CD4-positive, alpha-beta T cell (primary cell): ENCODE measurements at regions of chr17 and their contacts with region 1.

Region 1: DNA sequence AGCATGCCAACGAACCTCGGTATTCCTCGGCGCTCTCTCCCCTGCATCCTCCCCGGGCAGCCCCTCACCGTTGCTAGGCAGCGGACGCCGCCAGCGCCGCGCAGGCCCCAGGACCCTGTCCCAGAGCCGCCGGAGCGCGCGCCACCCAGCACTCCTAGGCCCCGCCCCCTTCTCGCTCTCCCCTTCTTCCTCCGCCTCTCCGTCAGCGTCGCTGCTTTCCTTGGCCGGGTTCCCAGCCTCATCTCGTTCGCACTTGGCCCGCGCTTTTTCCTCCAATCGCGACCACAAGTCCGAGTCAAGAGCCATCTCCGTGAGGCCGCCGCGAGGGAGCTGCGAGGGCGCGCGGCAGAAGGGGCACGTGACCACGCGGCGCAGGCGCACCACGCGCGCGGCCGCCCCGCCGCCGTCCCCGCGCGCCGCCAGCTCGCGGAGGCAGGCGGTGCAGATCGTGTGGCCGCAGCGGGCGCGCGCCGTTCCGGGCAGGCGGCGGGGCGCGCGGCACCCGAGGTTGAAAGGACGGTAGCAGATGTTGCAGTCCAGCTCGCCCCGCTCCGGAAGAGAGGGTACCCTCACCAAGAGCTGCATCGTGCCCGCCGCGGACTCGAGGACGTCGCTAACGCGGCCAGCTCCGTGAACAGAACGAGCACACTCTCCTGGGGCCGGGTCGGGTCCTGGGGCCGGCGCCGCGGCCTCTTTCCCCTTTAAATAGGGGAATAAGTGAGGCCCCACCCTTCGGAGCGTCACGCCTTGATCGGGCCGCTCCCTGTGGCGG is at the start of gene RNF227:
- DNase-seq: peak; percentile 68 to 94 (median 74)
- ATAC-seq: peak; percentile 73
- H3K4me3 ChIP-seq: peak within 1 kb of the TSS; percentile 77
- H3K4me3 Mint-ChIP-seq: peak within 1 kb of the TSS; percentile 89
- H3K27ac ChIP-seq: peak within 1 kb of the TSS; percentile 71 to 80
- H3K27ac Mint-ChIP-seq: peak within 1 kb of the TSS; percentile 90
- H3K4me1 ChIP-seq: peaks cover 35% of the 10 kb centered on the region
- H3K4me1 Mint-ChIP-seq: peaks cover 30% of the 10 kb centered on the region
- H3K27me3 ChIP-seq: no peaks in the 10 kb centered on the region
- H3K27me3 Mint-ChIP-seq: no peaks in the 10 kb centered on the region
- CTCF ChIP-seq: no peak
- total RNA-seq, gene RNF227: 3.2 to 3.5 TPM

Region 2: GRCh38 chr17:7825206-7825990 is 90.4 kb before region 1 on chr17:
- CTCF ChIA-PET with region 1: no interaction called
- POLR2A ChIA-PET with region 1: no interaction called
- intact Hi-C with region 1: loop called (anchors 5 to 10 kb)
- DNase-seq: peak in 1 of 14 experiments; percentile 39
- ATAC-seq: peak; percentile 31
- H3K4me3 ChIP-seq: no peak overlapping the region
- H3K4me3 Mint-ChIP-seq: no peak overlapping the region
- H3K27ac ChIP-seq: no peak overlapping the region
- H3K27ac Mint-ChIP-seq: no peak overlapping the region
- H3K4me1 ChIP-seq: no peaks in the 10 kb centered on the region
- H3K4me1 Mint-ChIP-seq: no peaks in the 10 kb centered on the region
- H3K27me3 ChIP-seq: no peaks in the 10 kb centered on the region
- H3K27me3 Mint-ChIP-seq: no peaks in the 10 kb centered on the region
- CTCF ChIP-seq: no peak

Region 3: GRCh38 chr17:7856883-7857723 is 58.7 kb before region 1 on chr17 and contains the start of gene NAA38:
- CTCF ChIA-PET with region 1: interaction called, 9 read pairs
- POLR2A ChIA-PET with region 1: interaction called, 11 read pairs
- intact Hi-C with region 1: loop called (anchors 10 kb)
- DNase-seq: peak; percentile 86 to 99 (median 91)
- ATAC-seq: peak; percentile 82
- H3K4me3 ChIP-seq: peak within 1 kb of the TSS; percentile 74
- H3K4me3 Mint-ChIP-seq: no peak within 1 kb of the TSS
- H3K27ac ChIP-seq: peak within 1 kb of the TSS; percentile 84 to 96
- H3K27ac Mint-ChIP-seq: no peak within 1 kb of the TSS
- H3K4me1 ChIP-seq: peaks cover 39% of the 10 kb centered on the region
- H3K4me1 Mint-ChIP-seq: peaks cover under 1% of the 10 kb centered on the region
- H3K27me3 ChIP-seq: no peaks in the 10 kb centered on the region
- H3K27me3 Mint-ChIP-seq: no peaks in the 10 kb centered on the region
- CTCF ChIP-seq: no peak
- total RNA-seq, gene NAA38: 15.4 to 16.3 TPM

Region 4: DNA sequence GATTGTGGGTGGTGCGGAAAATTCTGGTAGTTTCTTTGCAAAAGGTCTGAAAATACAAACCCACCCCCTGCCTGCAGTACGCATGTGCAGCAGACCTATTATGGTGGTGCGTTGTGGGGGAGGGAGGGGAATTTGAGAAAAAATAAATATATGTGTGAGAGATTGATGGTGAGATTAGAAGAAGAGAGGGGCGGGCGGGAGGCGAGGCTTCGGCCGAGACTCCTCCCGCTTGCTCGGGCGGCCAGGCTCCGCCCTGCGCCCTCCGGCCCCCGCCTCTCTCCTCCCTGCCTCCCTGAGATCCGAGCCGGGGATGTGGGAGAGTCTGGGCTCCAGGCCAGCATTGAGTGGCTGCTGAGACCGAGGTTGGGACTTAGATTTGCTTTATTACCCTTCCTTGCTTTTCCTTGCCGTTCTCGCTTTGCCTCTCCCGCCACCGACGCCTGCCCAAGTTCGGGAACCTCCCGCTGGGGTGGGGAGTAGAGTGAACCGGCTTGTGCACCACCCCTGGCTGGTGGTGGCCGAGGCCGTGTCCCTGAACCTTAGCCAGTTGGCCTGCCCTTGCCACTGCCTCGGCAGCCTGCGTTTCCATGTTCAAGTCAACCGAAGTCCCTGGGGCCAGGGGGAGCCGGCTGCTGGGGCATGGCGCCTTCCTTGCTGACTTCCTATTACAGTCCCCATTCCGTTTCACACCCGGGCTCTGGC is 28.2 kb before region 1 on chr17:
- CTCF ChIA-PET with region 1: no interaction called
- POLR2A ChIA-PET with region 1: interaction called, 3 read pairs
- intact Hi-C with region 1: loop called (anchors 2 kb)
- DNase-seq: peak; percentile 72 to 97 (median 86)
- ATAC-seq: peak; percentile 69
- H3K4me3 ChIP-seq: peak overlapping the region; percentile 98
- H3K4me3 Mint-ChIP-seq: no peak overlapping the region
- H3K27ac ChIP-seq: peak overlapping the region; percentile 75 to 96
- H3K27ac Mint-ChIP-seq: no peak overlapping the region
- H3K4me1 ChIP-seq: peaks cover 49% of the 10 kb centered on the region
- H3K4me1 Mint-ChIP-seq: peaks cover 6% of the 10 kb centered on the region
- H3K27me3 ChIP-seq: no peaks in the 10 kb centered on the region
- H3K27me3 Mint-ChIP-seq: no peaks in the 10 kb centered on the region
- CTCF ChIP-seq: no peak

Region 5: GRCh38 chr17:7989781-7990655 is 74.2 kb after region 1 on chr17:
- CTCF ChIA-PET with region 1: interaction called, 50 read pairs
- POLR2A ChIA-PET with region 1: interaction called, 37 read pairs
- intact Hi-C with region 1: loop called (anchors 1 kb)
- DNase-seq: peak; percentile 79 to 98 (median 93)
- ATAC-seq: peak; percentile 91
- H3K4me3 ChIP-seq: peak overlapping the region; percentile 55
- H3K4me3 Mint-ChIP-seq: peak overlapping the region; percentile 82
- H3K27ac ChIP-seq: peak overlapping the region; percentile 24 to 78
- H3K27ac Mint-ChIP-seq: peak overlapping the region; percentile 83
- H3K4me1 ChIP-seq: peaks cover 18% of the 10 kb centered on the region
- H3K4me1 Mint-ChIP-seq: peaks cover 26% of the 10 kb centered on the region
- H3K27me3 ChIP-seq: no peaks in the 10 kb centered on the region
- H3K27me3 Mint-ChIP-seq: peaks cover 4% of the 10 kb centered on the region
- CTCF ChIP-seq: peak; percentile 94

Region 6: DNA sequence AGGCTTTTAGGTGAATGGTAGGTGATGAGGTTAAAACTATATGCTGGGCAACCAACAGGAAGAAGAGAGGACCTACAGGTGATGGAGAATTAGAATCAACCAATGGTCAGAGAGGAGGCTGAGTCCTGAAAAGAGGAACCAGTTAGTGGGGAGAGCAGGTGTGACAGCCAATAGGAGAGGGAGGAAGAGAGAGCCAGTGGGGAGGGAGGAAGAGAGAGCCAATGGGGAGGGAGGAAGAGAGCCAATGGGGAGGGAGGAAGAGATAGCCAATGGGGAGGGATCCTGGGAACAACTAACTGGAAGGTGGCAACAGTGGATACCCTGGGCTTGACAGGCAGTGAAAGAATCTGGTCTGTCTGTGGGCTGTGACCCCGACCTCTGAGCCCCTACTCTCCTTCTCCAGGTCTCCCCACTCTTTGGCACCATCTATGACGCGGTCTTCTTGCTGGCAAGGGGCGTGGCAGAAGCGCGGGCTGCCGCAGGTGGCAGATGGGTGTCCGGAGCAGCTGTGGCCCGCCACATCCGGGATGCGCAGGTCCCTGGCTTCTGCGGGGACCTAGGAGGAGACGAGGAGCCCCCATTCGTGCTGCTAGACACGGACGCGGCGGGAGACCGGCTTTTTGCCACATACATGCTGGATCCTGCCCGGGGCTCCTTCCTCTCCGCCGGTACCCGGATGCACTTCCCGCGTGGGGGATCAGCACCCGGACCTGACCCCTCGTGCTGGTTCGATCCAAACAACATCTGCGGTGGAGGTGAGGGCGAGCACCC is 90.3 kb after region 1 on chr17:
- CTCF ChIA-PET with region 1: no interaction called
- POLR2A ChIA-PET with region 1: no interaction called
- intact Hi-C with region 1: no loop called
- DNase-seq: no peak
- ATAC-seq: no peak
- H3K4me3 ChIP-seq: no peak overlapping the region
- H3K4me3 Mint-ChIP-seq: no peak overlapping the region
- H3K27ac ChIP-seq: no peak overlapping the region
- H3K27ac Mint-ChIP-seq: no peak overlapping the region
- H3K4me1 ChIP-seq: peaks cover 9% of the 10 kb centered on the region
- H3K4me1 Mint-ChIP-seq: peaks cover 8% of the 10 kb centered on the region
- H3K27me3 ChIP-seq: peaks cover 19 to 41% of the 10 kb centered on the region in 2 experiments
- H3K27me3 Mint-ChIP-seq: peaks cover 39% of the 10 kb centered on the region
- CTCF ChIP-seq: no peak

Region 7: DNA sequence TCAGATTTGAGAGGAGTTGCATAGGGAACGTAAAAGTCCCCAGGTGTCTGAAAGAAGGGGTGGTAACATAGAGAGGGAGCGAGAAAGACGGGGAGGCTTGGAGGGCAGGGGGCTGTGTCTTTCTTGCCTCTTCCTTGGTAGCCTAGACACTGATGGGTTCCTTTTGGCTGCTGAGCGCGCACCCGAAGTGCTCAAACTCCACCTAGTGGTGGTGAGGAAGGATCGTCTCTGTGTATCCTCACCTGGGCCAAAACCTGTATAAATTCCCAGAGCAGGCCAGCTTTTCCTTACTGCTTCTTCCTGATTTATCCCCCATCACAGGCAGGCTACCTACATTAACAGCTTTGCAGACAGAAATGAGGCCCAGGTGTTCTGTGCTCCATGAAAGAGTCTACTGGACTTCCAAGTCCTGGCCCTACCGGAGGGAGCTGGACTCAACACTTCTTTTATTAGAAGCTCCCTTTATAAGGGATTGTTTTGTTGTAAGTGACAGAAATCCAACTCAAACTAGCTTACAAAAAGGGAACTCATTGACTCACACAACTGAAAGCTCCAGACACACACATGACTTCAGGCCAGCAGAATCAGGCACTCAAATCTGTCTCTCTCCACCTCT is 384.9 kb after region 1 on chr17:
- CTCF ChIA-PET with region 1: no interaction called
- POLR2A ChIA-PET with region 1: no interaction called
- intact Hi-C with region 1: loop called in 1 of 2 experiments (anchors 5 kb)
- DNase-seq: peak; percentile 39 to 87 (median 58)
- ATAC-seq: peak; percentile 96
- H3K4me3 ChIP-seq: no peak overlapping the region
- H3K4me3 Mint-ChIP-seq: peak overlapping the region; percentile 49
- H3K27ac ChIP-seq: no peak overlapping the region
- H3K27ac Mint-ChIP-seq: peak overlapping the region; percentile 8
- H3K4me1 ChIP-seq: peaks cover 10% of the 10 kb centered on the region
- H3K4me1 Mint-ChIP-seq: peaks cover 13% of the 10 kb centered on the region
- H3K27me3 ChIP-seq: no peaks in the 10 kb centered on the region
- H3K27me3 Mint-ChIP-seq: no peaks in the 10 kb centered on the region
- CTCF ChIP-seq: peak; percentile 81